ENCODE measurements at regions of chr4 and their contacts with region 1.

Region 1: GRCh38 chr4:87235020-87235671 is 14.7 kb upstream of the KLHL8 start:
- DNase-seq: peak; percentile 41
- ATAC-seq: peak; percentile 75
- H3K4me3 ChIP-seq: peak overlapping the region; percentile 73
- H3K27ac ChIP-seq: peak overlapping the region; percentile 57
- H3K4me1 ChIP-seq: peaks cover 27% of the 10 kb centered on the region
- H3K27me3 ChIP-seq: no peaks in the 10 kb centered on the region
- CTCF ChIP-seq: no peak

Region 2: GRCh38 chr4:86921608-86922252 is 313.4 kb before region 1 on chr4:
- CTCF ChIA-PET with region 1: no interaction called
- POLR2A ChIA-PET with region 1: no interaction called
- intact Hi-C with region 1: loop called (anchors 2 kb)
- DNase-seq: no peak
- ATAC-seq: no peak
- H3K4me3 ChIP-seq: no peak overlapping the region
- H3K27ac ChIP-seq: no peak overlapping the region
- H3K4me1 ChIP-seq: peaks cover 4% of the 10 kb centered on the region
- H3K27me3 ChIP-seq: no peaks in the 10 kb centered on the region
- CTCF ChIP-seq: no peak

Region 3: DNA sequence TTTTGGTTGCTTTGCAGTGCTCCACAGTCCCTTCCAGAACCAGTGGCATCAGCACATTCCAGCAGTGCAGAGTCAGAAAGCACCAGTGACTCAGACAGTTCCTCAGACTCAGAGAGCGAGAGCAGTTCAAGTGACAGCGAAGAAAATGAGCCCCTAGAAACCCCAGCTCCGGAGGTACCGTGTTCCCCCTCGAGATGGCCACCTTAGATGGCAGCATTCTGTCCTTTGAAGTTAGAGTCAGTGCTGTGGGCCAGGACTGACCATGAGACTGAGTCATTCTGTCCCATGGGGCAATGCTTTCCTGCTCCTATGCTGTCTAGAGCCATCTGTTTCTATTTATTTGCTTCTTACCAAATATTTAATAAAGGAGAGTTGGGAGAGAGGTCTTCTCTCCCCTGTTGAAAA is 127.0 kb before region 1 on chr4:
- CTCF ChIA-PET with region 1: no interaction called
- POLR2A ChIA-PET with region 1: no interaction called
- intact Hi-C with region 1: no loop called
- DNase-seq: peak; percentile 72
- ATAC-seq: peak; percentile 82
- H3K4me3 ChIP-seq: no peak overlapping the region
- H3K27ac ChIP-seq: peak overlapping the region; percentile 38
- H3K4me1 ChIP-seq: peaks cover 34% of the 10 kb centered on the region
- H3K27me3 ChIP-seq: no peaks in the 10 kb centered on the region
- CTCF ChIP-seq: no peak